Esophagus squamous epithelium (tissue), 5 donors: ENCODE measurements at regions of chr2 and their contacts with region 1.

Region 1: GRCh38 chr2:98654699-98655495 is 46.5 kb downstream of the UNC50 start:
- DNase-seq: no peak
- H3K4me3 ChIP-seq: no peak overlapping the region
- H3K27ac ChIP-seq: peak overlapping the region in 1 of 4 donors; percentile 14
- H3K4me1 ChIP-seq: peaks cover 0 to under 1% (median 0%) of the 10 kb centered on the region in 3 donors
- H3K27me3 ChIP-seq: no peaks in the 10 kb centered on the region
- CTCF ChIP-seq: no peak
- POLR2A ChIP-seq: no peak

Region 2: DNA sequence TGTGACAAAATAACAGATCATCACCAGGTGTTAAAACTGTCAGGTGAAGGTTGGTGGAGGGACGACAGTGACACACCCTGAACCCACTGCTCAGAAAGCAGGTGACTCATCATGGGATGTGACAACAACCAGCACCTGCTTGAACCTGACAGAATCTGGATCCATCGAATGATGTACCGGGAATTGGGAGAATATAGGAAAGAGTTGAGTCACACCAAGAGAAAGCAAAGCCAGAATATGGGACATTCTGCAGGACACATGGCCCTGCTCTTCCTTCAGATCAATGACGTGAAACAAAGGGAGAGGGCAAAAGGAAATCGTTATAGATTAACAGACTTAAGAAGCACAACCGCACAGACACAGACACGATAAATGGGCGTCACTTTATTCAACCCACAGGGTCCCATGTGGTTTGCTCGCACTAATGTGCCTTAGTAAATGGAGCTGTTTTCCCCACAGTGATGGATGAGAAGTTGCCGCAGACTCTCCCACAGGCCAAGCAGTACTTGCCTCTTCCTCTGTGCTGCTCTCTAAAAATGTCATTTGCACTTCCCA is 181.0 kb after region 1 on chr2:
- intact Hi-C with region 1: loop called (anchors 5 kb)
- DNase-seq: no peak
- H3K4me3 ChIP-seq: no peak overlapping the region
- H3K27ac ChIP-seq: peak overlapping the region in 1 of 4 donors; percentile 21
- H3K4me1 ChIP-seq: peaks cover 0 to 14% (median 3%) of the 10 kb centered on the region in 3 donors
- H3K27me3 ChIP-seq: no peaks in the 10 kb centered on the region
- CTCF ChIP-seq: no peak
- POLR2A ChIP-seq: no peak

Region 3: GRCh38 chr2:99066075-99066958 is 411.4 kb after region 1 on chr2:
- intact Hi-C with region 1: loop called (anchors 5 kb)
- DNase-seq: no peak
- H3K4me3 ChIP-seq: peak overlapping the region in 2 of 4 donors; percentile 6 to 20
- H3K27ac ChIP-seq: peak overlapping the region; percentile 38 to 76 (median 54)
- H3K4me1 ChIP-seq: peaks cover 0 to 12% (median 0%) of the 10 kb centered on the region in 3 donors
- H3K27me3 ChIP-seq: no peaks in the 10 kb centered on the region
- CTCF ChIP-seq: peak in 4 of 6 experiments; percentile 51 to 73 (median 56)
- POLR2A ChIP-seq: no peak